ENCODE measurements at regions of chr4 and their contacts with region 1.

Region 1: GRCh38 chr4:75895744-75896314 is 6.4 kb downstream of the PPEF2 start:
- DNase-seq: peak; percentile 17
- ATAC-seq: peak; percentile 64
- H3K4me3 Mint-ChIP-seq: no peak overlapping the region
- H3K27ac Mint-ChIP-seq: no peak overlapping the region
- H3K4me1 Mint-ChIP-seq: no peaks in the 10 kb centered on the region
- H3K27me3 Mint-ChIP-seq: no peaks in the 10 kb centered on the region

Region 2: GRCh38 chr4:74996996-74997395 is 898.8 kb before region 1 on chr4:
- CTCF ChIA-PET with region 1: no interaction called
- POLR2A ChIA-PET with region 1: no interaction called
- intact Hi-C with region 1: no loop called
- DNase-seq: no peak
- ATAC-seq: no peak
- H3K4me3 Mint-ChIP-seq: no peak overlapping the region
- H3K27ac Mint-ChIP-seq: no peak overlapping the region
- H3K4me1 Mint-ChIP-seq: no peaks in the 10 kb centered on the region
- H3K27me3 Mint-ChIP-seq: no peaks in the 10 kb centered on the region

Region 3: GRCh38 chr4:75908555-75908954 is 12.7 kb after region 1 on chr4:
- CTCF ChIA-PET with region 1: interaction called, 20 read pairs
- POLR2A ChIA-PET with region 1: no interaction called
- intact Hi-C with region 1: no loop called
- DNase-seq: no peak
- ATAC-seq: no peak
- H3K4me3 Mint-ChIP-seq: no peak overlapping the region
- H3K27ac Mint-ChIP-seq: no peak overlapping the region
- H3K4me1 Mint-ChIP-seq: no peaks in the 10 kb centered on the region
- H3K27me3 Mint-ChIP-seq: no peaks in the 10 kb centered on the region

Region 4: GRCh38 chr4:75950213-75950815 is 54.5 kb after region 1 on chr4:
- CTCF ChIA-PET with region 1: interaction called, 12 read pairs
- POLR2A ChIA-PET with region 1: no interaction called
- intact Hi-C with region 1: no loop called
- DNase-seq: no peak
- ATAC-seq: no peak
- H3K4me3 Mint-ChIP-seq: no peak overlapping the region
- H3K27ac Mint-ChIP-seq: no peak overlapping the region
- H3K4me1 Mint-ChIP-seq: no peaks in the 10 kb centered on the region
- H3K27me3 Mint-ChIP-seq: no peaks in the 10 kb centered on the region

Region 5: GRCh38 chr4:76067652-76068286 is 171.9 kb after region 1 on chr4:
- CTCF ChIA-PET with region 1: interaction called, 3 read pairs
- POLR2A ChIA-PET with region 1: no interaction called
- intact Hi-C with region 1: loop called (anchors 1 to 5 kb)
- DNase-seq: peak; percentile 87
- ATAC-seq: peak; percentile 88
- H3K4me3 Mint-ChIP-seq: no peak overlapping the region
- H3K27ac Mint-ChIP-seq: no peak overlapping the region
- H3K4me1 Mint-ChIP-seq: no peaks in the 10 kb centered on the region
- H3K27me3 Mint-ChIP-seq: peaks cover 2% of the 10 kb centered on the region

Region 6: DNA sequence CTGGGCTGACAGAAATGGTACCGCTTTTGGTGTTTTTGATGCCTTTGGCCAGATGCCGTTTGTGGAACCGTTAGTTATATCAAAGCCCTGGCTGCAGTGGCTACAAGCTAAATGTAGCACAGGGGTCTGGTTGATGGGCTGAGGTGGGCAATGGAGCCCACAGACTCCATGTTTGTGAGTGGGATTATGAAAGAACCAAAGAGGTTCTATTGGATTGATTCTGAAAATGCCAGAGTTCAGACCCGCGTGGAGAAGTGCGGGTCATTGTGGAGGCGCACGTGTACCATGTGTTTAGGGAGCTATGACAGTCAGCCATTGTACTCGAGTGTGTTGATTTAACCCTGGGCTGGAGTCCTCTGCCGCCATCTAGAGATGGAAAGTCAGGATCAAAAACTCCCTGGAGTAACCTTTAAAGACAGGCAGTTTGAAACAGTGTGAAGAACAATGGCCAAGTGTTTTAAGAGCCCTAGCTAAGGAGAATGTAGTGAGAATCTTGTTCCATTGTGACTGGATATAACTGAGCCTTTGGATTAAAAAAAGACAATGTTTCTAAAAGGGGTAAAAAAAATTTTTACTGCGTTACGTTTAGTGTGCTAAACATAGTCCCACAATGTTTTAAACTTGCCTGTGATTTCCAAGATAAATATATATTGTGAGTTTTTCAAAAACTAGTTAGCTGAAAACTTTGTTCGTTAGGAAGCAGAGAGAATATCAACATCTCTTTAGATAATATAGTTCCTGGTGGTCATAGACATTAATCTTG is 191.4 kb after region 1 on chr4:
- CTCF ChIA-PET with region 1: interaction called, 3 read pairs
- POLR2A ChIA-PET with region 1: no interaction called
- intact Hi-C with region 1: loop called in 1 of 2 experiments (anchors 5 kb)
- DNase-seq: peak; percentile 34
- ATAC-seq: peak; percentile 61
- H3K4me3 Mint-ChIP-seq: no peak overlapping the region
- H3K27ac Mint-ChIP-seq: no peak overlapping the region
- H3K4me1 Mint-ChIP-seq: peaks cover 5% of the 10 kb centered on the region
- H3K27me3 Mint-ChIP-seq: peaks cover 10% of the 10 kb centered on the region

Region 7: GRCh38 chr4:76658231-76659102 is 762.6 kb after region 1 on chr4:
- CTCF ChIA-PET with region 1: no interaction called
- POLR2A ChIA-PET with region 1: no interaction called
- intact Hi-C with region 1: no loop called
- DNase-seq: no peak
- ATAC-seq: peak; percentile 39
- H3K4me3 Mint-ChIP-seq: no peak overlapping the region
- H3K27ac Mint-ChIP-seq: no peak overlapping the region
- H3K4me1 Mint-ChIP-seq: peaks cover 4% of the 10 kb centered on the region
- H3K27me3 Mint-ChIP-seq: peaks cover 5% of the 10 kb centered on the region

Measured in activated CD4-positive, alpha-beta T cell treated with anti-CD3 and anti-CD28 coated beads for 36 hours (primary cell).